ENCODE measurements at regions of chr4 and their contacts with region 1.

Region 1: GRCh38 chr4:177680308-177680707 is 238.1 kb upstream of the AGA start:
- DNase-seq: no peak

Region 2: GRCh38 chr4:177118596-177118995 is 561.7 kb before region 1 on chr4:
- intact Hi-C with region 1: loop called in 1 of 2 experiments (anchors 10 kb)
- DNase-seq: no peak

Region 3: DNA sequence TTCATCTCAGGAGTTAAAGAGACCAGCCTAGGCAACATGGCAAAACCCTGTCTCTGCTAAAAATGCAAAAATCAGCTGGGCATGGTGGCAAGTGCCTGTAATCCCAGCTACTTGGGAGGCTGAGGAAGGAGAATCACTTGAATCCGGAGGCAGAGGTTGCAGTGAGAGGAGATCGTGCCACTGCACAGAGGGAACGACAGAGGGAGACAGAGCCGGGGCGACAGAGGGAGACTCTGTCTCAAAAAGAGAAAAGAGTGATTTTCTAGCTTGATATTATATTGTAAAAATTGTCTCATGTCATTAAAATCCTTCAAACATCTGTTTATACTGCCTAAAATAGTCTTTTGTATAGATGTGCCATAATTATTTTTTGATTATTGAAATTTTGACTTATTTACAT is 12.6 kb before region 1 on chr4:
- intact Hi-C with region 1: no loop called
- DNase-seq: no peak